Activated CD4-positive, alpha-beta memory T cell treated with anti-CD3 and anti-CD28 coated beads, Interleukin-2, amount 10 ng/mL, durations not matched to agents 7 days and 5 days (primary cell): ENCODE measurements at regions of chr1 and their contacts with region 1.

Region 1: DNA sequence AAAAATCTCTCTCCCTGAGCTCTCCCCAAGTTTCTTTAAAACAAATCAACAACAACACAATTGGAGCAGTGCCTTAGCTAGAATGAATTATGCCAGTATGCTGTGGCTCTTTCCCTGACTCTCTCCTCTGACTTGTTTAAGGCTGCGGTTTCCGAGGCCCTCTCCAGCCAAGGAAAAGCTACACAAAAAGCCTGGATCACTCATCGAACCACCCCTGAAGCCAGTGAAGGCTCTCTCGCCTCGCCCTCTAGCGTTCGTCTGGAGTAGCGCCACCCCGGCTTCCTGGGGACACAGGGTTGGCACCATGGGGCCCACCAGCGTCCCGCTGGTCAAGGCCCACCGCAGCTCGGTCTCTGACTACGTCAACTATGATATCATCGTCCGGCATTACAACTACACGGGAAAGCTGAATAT is 1.9 kb downstream of the S1PR1 start:
- DNase-seq: peak; percentile 90
- H3K4me3 Mint-ChIP-seq: peak overlapping the region; percentile 95
- H3K27ac Mint-ChIP-seq: peak overlapping the region; percentile 98
- H3K4me1 Mint-ChIP-seq: peaks cover 51% of the 10 kb centered on the region
- H3K27me3 Mint-ChIP-seq: no peaks in the 10 kb centered on the region

Region 2: DNA sequence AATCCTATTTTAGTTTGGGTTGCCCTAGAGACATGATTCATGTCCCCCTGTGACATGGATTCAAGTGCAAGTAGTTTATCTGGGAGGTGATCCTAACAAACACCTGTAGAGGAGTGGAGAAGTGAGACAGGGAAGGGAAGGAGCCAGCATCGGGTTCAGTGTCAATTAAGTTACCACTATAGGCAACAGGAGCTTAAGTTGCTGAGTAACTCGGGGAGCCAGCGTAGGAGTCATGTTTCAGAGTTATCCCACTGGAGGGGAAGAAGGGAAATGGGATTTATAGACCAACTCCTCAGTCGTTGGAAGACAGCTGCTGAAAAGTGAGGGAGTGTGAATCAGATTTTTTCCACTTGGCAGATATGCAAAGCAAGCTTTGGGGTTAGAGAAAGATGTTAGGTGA is 287.9 kb before region 1 on chr1:
- CTCF ChIA-PET with region 1: interaction called, 13 read pairs
- POLR2A ChIA-PET with region 1: interaction called, 26 read pairs
- DNase-seq: no peak
- H3K4me3 Mint-ChIP-seq: no peak overlapping the region
- H3K27ac Mint-ChIP-seq: no peak overlapping the region
- H3K4me1 Mint-ChIP-seq: peaks cover 69% of the 10 kb centered on the region
- H3K27me3 Mint-ChIP-seq: no peaks in the 10 kb centered on the region

Region 3: GRCh38 chr1:101088431-101088830 is 150.3 kb before region 1 on chr1:
- CTCF ChIA-PET with region 1: interaction called, 23 read pairs
- POLR2A ChIA-PET with region 1: interaction called, 52 read pairs
- DNase-seq: no peak
- H3K4me3 Mint-ChIP-seq: no peak overlapping the region
- H3K27ac Mint-ChIP-seq: no peak overlapping the region
- H3K4me1 Mint-ChIP-seq: peaks cover 44% of the 10 kb centered on the region
- H3K27me3 Mint-ChIP-seq: no peaks in the 10 kb centered on the region

Region 4: DNA sequence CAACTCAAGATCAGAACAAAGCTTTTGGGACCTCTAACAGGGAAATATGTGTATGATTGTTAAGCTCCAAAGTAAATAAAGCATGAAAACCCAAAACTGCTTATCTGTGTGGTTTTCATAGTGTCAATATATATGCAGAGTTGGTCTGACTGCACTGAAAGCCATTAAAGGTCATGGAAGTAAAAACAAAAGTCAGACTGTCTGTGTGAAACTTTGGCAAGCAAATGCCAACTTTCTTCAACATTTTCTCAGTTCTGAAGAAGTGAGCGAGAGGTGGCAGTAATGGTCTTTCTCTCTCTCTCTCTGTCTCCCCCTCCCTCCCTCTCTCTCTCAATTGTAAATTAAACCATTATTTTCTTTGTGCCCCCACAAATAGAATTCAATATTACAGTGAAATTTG is 101.9 kb before region 1 on chr1:
- CTCF ChIA-PET with region 1: interaction called, 84 read pairs
- POLR2A ChIA-PET with region 1: interaction called, 151 read pairs
- DNase-seq: peak; percentile 26
- H3K4me3 Mint-ChIP-seq: no peak overlapping the region
- H3K27ac Mint-ChIP-seq: peak overlapping the region; percentile 64
- H3K4me1 Mint-ChIP-seq: peaks cover 58% of the 10 kb centered on the region
- H3K27me3 Mint-ChIP-seq: no peaks in the 10 kb centered on the region

Region 5: GRCh38 chr1:101221945-101222429 is 16.7 kb before region 1 on chr1:
- CTCF ChIA-PET with region 1: interaction called, 4 read pairs
- POLR2A ChIA-PET with region 1: interaction called, 38 read pairs
- DNase-seq: no peak
- H3K4me3 Mint-ChIP-seq: peak overlapping the region; percentile 70
- H3K27ac Mint-ChIP-seq: peak overlapping the region; percentile 78
- H3K4me1 Mint-ChIP-seq: peaks cover 27% of the 10 kb centered on the region
- H3K27me3 Mint-ChIP-seq: no peaks in the 10 kb centered on the region

Region 6: GRCh38 chr1:101288491-101288944 is 49.8 kb after region 1 on chr1:
- CTCF ChIA-PET with region 1: interaction called, 244 read pairs
- POLR2A ChIA-PET with region 1: interaction called, 391 read pairs
- DNase-seq: peak; percentile 71
- H3K4me3 Mint-ChIP-seq: no peak overlapping the region
- H3K27ac Mint-ChIP-seq: no peak overlapping the region
- H3K4me1 Mint-ChIP-seq: peaks cover 85% of the 10 kb centered on the region
- H3K27me3 Mint-ChIP-seq: no peaks in the 10 kb centered on the region